Motor neuron (in vitro differentiated cells): ENCODE measurements at regions of chr3 and their contacts with region 1.

Region 1: DNA sequence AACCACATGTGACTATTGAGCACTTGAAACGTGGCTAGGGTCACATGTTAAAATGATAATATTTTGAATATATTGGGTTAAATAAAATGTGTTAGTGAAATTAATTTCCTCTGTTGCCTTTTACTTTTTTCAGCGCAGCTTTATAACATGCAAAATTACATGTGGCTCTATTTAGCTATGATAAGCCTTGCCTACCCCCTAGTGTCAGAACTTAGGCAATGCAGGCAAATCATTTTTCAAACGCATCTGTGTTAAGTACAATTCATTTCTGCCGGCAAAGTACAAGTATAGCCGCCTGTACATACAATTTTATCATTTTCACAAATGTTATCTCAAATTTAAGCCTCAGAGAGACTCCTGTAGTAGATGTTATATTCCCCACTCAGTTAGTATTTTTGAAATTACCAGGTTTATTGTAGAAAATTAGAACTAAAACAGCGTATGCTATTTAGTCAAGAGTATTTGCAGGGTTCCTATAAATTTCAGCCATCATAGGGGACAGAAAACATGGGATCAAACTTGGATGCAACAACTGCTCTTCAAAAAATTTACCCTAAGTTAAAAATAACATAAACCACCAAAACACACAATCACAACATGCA is 56.1 kb downstream of the TAFA4 start:
- ATAC-seq: peak in 7 of 8 experiments; percentile 43 to 77 (median 59)
- H3K4me3 ChIP-seq: no peak overlapping the region
- H3K27ac ChIP-seq: no peak overlapping the region
- H3K4me1 ChIP-seq: no peaks in the 10 kb centered on the region

Region 2: DNA sequence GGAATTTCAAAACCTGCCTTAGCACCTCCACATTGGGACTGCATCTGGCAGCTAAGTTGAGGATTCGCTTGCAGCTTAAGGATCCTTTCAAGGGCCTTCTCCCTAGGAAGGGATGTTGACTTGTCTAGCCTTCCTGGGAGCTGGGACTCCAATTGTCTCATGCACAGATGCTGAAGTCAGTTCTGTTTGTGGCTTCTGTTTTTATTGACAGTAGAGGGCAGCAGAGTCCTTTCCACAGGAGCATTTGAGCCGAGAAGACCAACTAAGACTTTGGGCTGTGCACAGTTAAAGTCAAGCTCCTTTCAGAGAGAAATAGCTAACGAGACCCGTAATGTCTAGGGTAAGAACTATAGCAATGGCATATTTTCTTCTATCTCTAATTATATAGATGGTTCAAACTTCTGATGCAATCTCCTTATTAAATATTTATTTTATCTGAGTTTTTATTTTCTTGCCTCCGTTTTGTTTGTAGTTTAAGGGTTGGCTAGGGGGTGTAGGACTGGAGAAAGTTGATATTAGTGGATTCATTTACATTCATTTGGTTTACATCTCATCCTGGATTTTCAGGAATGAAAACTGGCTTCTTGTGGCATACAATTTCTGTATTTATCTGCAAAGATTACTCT is 1937.8 kb before region 1 on chr3:
- in situ Hi-C with region 1: loop called in 2 of 9 experiments (anchors 25 kb)
- ATAC-seq: peak; percentile 81 to 100 (median 97)
- H3K4me3 ChIP-seq: no peak overlapping the region
- H3K27ac ChIP-seq: no peak overlapping the region
- H3K4me1 ChIP-seq: peaks cover 13 to 18% of the 10 kb centered on the region in 2 donors

Region 3: GRCh38 chr3:66971891-66972551 is 1904.2 kb before region 1 on chr3:
- in situ Hi-C with region 1: loop called in 1 of 9 experiments (anchors 25 kb)
- ATAC-seq: peak; percentile 98 to 100 (median 100)
- H3K4me3 ChIP-seq: no peak overlapping the region
- H3K27ac ChIP-seq: no peak overlapping the region
- H3K4me1 ChIP-seq: no peaks in the 10 kb centered on the region

Region 4: GRCh38 chr3:67113802-67114407 is 1762.3 kb before region 1 on chr3:
- in situ Hi-C with region 1: loop called in 4 of 9 experiments (anchors 25 kb)
- ATAC-seq: peak; percentile 93 to 100 (median 98)
- H3K4me3 ChIP-seq: no peak overlapping the region
- H3K27ac ChIP-seq: no peak overlapping the region
- H3K4me1 ChIP-seq: no peaks in the 10 kb centered on the region

Region 5: DNA sequence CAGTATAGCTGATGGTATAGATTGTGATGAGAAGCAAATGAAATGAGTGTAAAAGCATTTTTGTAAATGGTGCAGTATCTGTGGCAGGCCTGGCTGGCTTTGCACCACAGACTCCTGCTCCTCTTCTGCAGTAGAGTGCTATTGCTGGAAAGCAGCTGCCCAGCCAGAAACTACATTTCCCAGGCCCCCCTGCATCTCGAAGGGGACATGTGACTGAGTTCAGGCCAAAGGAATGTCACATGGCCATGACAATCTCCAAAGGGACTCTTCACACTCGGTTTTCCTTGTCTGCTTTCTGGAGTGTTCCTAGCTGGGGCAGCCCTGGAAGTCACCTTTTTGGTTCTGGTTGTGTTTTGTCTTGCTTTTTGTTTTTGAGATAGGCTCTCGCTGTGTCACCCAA is 1498.9 kb before region 1 on chr3:
- in situ Hi-C with region 1: loop called in 4 of 9 experiments (anchors 10 to 25 kb)
- ATAC-seq: peak in 1 of 8 experiments; percentile 16
- H3K4me3 ChIP-seq: no peak overlapping the region
- H3K27ac ChIP-seq: no peak overlapping the region
- H3K4me1 ChIP-seq: no peaks in the 10 kb centered on the region

Region 6: GRCh38 chr3:67384760-67385397 is 1491.3 kb before region 1 on chr3:
- in situ Hi-C with region 1: loop called in 3 of 9 experiments (anchors 10 to 25 kb)
- ATAC-seq: peak; percentile 53 to 86 (median 65)
- H3K4me3 ChIP-seq: no peak overlapping the region
- H3K27ac ChIP-seq: no peak overlapping the region
- H3K4me1 ChIP-seq: no peaks in the 10 kb centered on the region

Region 7: DNA sequence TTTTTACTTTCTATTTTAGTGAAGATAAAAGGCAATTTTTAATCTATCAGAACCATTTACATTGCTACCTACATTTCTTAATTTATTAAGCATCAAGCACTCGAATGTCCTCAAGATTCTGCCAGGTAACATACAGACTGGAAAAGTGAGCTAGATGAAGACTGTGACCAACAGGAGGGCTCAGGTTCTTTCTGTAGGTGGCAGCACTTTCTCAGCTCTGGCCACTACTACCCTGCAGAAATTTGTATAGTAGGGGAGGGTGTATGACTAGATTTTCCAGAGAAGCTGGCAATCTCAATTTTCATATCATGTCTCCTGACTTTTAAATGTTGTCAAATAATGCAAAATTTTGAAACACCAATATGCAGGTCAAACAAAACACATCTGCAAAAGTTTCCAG is 1056.8 kb before region 1 on chr3:
- in situ Hi-C with region 1: loop called in 2 of 9 experiments (anchors 25 kb)
- ATAC-seq: peak in 4 of 8 experiments; percentile 42 to 89 (median 83)
- H3K4me3 ChIP-seq: no peak overlapping the region
- H3K27ac ChIP-seq: no peak overlapping the region
- H3K4me1 ChIP-seq: no peaks in the 10 kb centered on the region

Region 8: GRCh38 chr3:68988740-68989139 is 112.5 kb after region 1 on chr3:
- in situ Hi-C with region 1: no loop called
- ATAC-seq: peak in 1 of 8 experiments; percentile 20
- H3K4me3 ChIP-seq: no peak overlapping the region
- H3K27ac ChIP-seq: no peak overlapping the region
- H3K4me1 ChIP-seq: no peaks in the 10 kb centered on the region

Region 9: GRCh38 chr3:69143605-69144004 is 267.4 kb after region 1 on chr3:
- in situ Hi-C with region 1: no loop called
- ATAC-seq: peak in 6 of 8 experiments; percentile 48 to 98 (median 77)
- H3K4me3 ChIP-seq: no peak overlapping the region
- H3K27ac ChIP-seq: no peak overlapping the region
- H3K4me1 ChIP-seq: peaks cover 14 to 18% of the 10 kb centered on the region in 2 donors

Region 10: DNA sequence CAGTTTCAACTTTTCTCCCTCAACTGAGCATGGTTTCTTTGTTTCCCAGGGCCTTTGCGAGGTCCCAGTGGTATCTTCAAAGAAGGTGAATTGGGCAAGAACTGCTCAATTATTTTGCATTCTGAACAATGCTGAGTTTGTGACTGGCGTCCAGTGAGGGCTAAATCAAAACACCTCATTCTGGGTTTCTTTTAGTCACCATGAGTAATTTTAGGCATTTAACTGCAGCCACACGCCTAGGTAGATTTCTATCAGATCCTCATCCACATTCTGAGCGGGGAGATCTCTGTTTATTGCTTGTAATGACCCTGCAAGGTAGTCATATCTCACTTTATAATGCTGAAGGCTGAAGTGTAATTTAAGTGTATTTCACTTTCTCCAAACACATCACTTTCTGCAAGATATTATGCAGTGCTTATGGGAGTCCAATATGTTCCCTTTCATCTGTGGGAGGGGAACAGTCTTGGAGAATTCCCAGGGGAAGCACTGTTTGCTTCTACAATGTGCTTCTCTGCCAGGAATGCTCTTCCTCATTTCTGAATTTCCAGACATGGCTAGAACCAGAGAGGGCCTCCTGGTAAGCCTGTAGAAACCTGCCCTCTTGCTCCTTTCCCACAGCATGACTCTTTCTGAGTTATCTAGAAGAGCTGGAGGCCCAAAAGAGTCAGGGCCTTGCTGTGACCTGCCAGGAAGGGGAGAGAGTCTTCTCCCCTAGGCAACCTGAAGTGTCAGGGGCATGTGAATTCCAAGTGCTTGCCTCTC is 418.0 kb after region 1 on chr3:
- in situ Hi-C with region 1: no loop called
- ATAC-seq: peak in 5 of 8 experiments; percentile 8 to 60 (median 34)
- H3K4me3 ChIP-seq: no peak overlapping the region
- H3K27ac ChIP-seq: peak overlapping the region in 1 of 2 donors; percentile 25
- H3K4me1 ChIP-seq: peaks cover 58 to 73% of the 10 kb centered on the region in 2 donors

Region 11: DNA sequence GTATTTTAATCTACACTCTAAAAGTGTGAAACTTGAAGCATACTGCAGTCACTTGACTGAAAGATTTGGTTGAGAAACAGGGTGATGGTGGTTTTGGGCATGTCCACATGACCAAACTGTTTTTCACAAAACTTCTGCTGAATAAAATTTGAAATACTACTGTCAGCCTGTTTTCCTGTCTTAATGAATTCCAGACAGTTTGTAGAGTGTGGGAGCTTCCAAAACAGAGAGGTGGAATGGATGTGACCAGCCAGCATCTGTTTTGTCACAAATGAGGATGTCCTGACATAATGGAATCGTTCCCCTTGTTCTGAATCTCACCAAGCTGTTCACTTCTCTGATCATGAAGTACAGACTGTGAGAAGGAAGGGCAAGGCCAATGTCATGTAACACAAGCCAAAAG is 874.9 kb after region 1 on chr3:
- in situ Hi-C with region 1: no loop called
- ATAC-seq: no peak
- H3K4me3 ChIP-seq: no peak overlapping the region
- H3K27ac ChIP-seq: no peak overlapping the region
- H3K4me1 ChIP-seq: no peaks in the 10 kb centered on the region